ENCODE measurements at regions of chr1 and their contacts with region 1.

Region 1: GRCh38 chr1:151639466-151639865 is 27.6 kb downstream of the SNX27 start:
- DNase-seq: peak; percentile 37
- H3K4me3 ChIP-seq: no peak overlapping the region
- H3K27ac ChIP-seq: no peak overlapping the region
- H3K4me1 ChIP-seq: peaks cover 8% of the 10 kb centered on the region
- H3K27me3 ChIP-seq: no peaks in the 10 kb centered on the region
- CTCF ChIP-seq: no peak

Region 2: GRCh38 chr1:151585622-151586021 is 53.8 kb before region 1 on chr1:
- CTCF ChIA-PET with region 1: no interaction called
- dilution Hi-C with region 1: no loop called
- in situ Hi-C with region 1: no loop called
- intact Hi-C with region 1: no loop called
- DNase-seq: peak; percentile 70
- H3K4me3 ChIP-seq: no peak overlapping the region
- H3K27ac ChIP-seq: no peak overlapping the region
- H3K4me1 ChIP-seq: peaks cover 28% of the 10 kb centered on the region
- H3K27me3 ChIP-seq: no peaks in the 10 kb centered on the region
- CTCF ChIP-seq: no peak

Region 3: GRCh38 chr1:151606395-151606794 is 33.1 kb before region 1 on chr1:
- CTCF ChIA-PET with region 1: no interaction called
- dilution Hi-C with region 1: loop called (anchors 5 kb)
- in situ Hi-C with region 1: no loop called
- intact Hi-C with region 1: no loop called
- DNase-seq: peak; percentile 94
- H3K4me3 ChIP-seq: no peak overlapping the region
- H3K27ac ChIP-seq: no peak overlapping the region
- H3K4me1 ChIP-seq: peaks cover 23% of the 10 kb centered on the region
- H3K27me3 ChIP-seq: no peaks in the 10 kb centered on the region
- CTCF ChIP-seq: no peak

Region 4: DNA sequence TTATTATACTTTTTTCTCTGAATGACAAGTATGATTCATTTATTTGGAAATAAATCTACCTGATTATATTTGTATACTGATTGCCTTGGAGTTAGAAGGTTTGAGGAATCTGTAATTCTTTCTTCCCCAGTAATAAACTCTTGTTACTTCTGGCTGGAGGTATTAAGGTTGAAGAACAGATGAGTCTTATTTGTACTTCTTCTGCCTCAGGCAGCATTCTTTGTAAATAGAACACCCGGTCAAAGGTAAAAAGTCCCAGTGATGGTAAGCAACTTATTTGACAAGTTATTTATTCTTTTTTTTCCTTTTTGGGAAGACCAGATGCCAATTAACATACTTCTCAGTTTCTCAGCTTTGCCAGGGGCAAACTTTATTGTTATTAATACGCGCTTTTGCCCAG is 14.7 kb before region 1 on chr1:
- CTCF ChIA-PET with region 1: no interaction called
- dilution Hi-C with region 1: no loop called
- in situ Hi-C with region 1: no loop called
- intact Hi-C with region 1: loop called (anchors 1 kb)
- DNase-seq: no peak
- H3K4me3 ChIP-seq: no peak overlapping the region
- H3K27ac ChIP-seq: no peak overlapping the region
- H3K4me1 ChIP-seq: no peaks in the 10 kb centered on the region
- H3K27me3 ChIP-seq: no peaks in the 10 kb centered on the region
- CTCF ChIP-seq: no peak

Region 5: GRCh38 chr1:152141974-152142584 is 502.6 kb after region 1 on chr1:
- CTCF ChIA-PET with region 1: no interaction called
- dilution Hi-C with region 1: no loop called
- in situ Hi-C with region 1: no loop called
- intact Hi-C with region 1: no loop called
- DNase-seq: peak; percentile 54
- H3K4me3 ChIP-seq: no peak overlapping the region
- H3K27ac ChIP-seq: no peak overlapping the region
- H3K4me1 ChIP-seq: no peaks in the 10 kb centered on the region
- H3K27me3 ChIP-seq: peaks cover 7% of the 10 kb centered on the region
- CTCF ChIP-seq: peak; percentile 91 to 92